ENCODE measurements at regions of chr2 and their contacts with region 1.

Region 1: DNA sequence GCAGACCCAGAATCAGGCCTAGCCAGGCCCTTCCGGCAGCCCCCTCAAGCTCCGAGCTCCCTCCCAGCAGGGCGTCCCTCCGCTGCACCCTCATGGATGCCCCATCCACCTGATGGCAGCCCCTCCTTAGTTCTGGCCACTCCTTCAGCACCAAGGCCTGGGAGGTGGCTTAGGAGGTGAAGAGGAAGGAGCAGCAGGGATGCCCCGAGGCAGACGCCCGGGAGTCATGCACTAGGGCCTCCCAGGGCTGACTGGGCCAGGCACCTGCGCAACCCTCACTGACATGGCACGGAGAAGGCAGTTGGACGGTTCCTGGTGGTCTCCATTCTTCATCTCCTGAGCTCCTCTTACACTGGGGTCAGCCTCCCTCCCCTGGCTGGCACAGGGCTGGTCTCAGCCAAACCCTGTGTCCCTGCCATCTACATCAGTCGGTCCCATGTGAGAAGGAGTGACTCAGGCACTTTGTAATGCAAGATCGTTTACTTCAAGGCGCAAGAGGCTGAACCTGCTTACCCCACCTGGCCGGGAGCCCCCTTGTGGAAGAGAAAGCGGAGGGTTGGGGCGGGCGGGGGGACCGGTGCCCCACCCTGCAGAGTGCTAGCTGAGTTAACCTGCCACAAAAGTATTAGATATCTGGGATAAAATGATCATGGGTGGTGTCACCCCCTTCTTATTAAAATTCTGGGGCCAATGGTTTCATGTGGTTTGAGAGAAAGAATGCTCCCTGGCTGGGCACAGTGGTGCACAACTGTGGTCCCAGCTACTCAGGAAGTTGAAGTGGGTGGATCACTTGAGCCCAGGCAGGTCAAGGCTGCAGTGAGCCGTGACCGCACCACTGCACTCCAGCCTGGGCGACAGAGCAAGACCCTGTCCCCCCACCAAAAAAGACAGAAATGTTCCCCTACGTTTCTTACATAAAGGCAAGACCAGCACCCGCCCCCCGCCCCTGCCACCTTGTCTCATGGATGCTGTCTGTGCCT is 53.3 kb upstream of the ID2 start:
- DNase-seq: peak; percentile 50
- ATAC-seq: no peak

Region 2: DNA sequence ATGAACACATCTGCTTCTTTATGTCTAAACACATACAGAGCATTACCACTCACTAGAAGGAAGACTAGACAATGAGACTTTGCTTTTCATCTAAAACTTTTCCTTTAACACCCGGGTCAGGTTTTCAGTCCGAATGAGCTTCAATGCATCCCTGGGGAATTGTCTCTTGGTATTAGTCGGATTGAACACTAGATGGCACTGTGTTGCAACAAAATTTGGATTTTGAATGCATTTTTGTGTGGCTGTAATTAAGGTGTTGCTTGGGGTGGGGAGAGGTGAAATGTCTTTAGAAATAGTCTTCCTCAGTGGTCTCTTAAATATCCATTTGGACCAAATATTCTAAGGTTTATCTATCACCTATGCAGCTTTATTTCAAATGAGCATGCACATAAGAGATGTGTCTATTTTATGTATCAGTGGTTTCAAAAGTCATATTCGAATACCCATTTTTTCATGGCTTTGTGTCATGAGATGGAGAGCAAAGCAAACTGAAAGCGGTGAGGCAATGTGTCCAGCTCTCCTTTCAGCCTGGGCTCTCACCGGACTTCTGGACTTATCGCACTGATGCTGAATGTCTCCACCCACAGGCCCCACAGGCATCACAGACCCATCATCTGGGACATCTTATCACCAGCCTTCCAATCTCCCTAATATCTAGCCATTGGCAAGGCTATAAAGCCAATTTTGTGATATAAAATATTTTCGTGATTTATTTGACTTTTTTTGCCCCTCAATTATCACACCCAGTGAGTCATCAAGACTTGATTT is 1201.0 kb before region 1 on chr2:
- intact Hi-C with region 1: loop called (anchors 5 kb)
- DNase-seq: no peak
- ATAC-seq: peak; percentile 43

Measured in sciatic nerve (tissue), 2 donors.